B cell (primary cell): ENCODE measurements at regions of chr4 and their contacts with region 1.

Region 1: GRCh38 chr4:184851200-184851541 is 25.4 kb upstream of the ACSL1 start:
- DNase-seq: peak; percentile 73
- ATAC-seq: peak; percentile 84
- H3K4me3 ChIP-seq: peak overlapping the region in 1 of 5 experiments; percentile 1
- H3K4me3 Mint-ChIP-seq: no peak overlapping the region
- H3K27ac ChIP-seq: peak overlapping the region in 1 of 2 donors; percentile 25
- H3K27ac Mint-ChIP-seq: no peak overlapping the region
- H3K4me1 ChIP-seq: peaks cover 32 to 52% of the 10 kb centered on the region in 2 donors
- H3K4me1 Mint-ChIP-seq: peaks cover 35% of the 10 kb centered on the region
- H3K27me3 ChIP-seq: no peaks in the 10 kb centered on the region
- H3K27me3 Mint-ChIP-seq: no peaks in the 10 kb centered on the region
- CTCF ChIP-seq: no peak

Region 2: GRCh38 chr4:184815046-184815877 is 35.9 kb before region 1 on chr4:
- CTCF ChIA-PET with region 1: no interaction called
- POLR2A ChIA-PET with region 1: interaction called, 3 read pairs
- intact Hi-C with region 1: loop called (anchors 5 kb)
- DNase-seq: peak; percentile 45
- ATAC-seq: peak; percentile 65
- H3K4me3 ChIP-seq: peak overlapping the region in 2 of 5 experiments; percentile 6 to 9
- H3K4me3 Mint-ChIP-seq: peak overlapping the region; percentile 78
- H3K27ac ChIP-seq: peak overlapping the region; percentile 45 to 47
- H3K27ac Mint-ChIP-seq: peak overlapping the region; percentile 80
- H3K4me1 ChIP-seq: peaks cover 40 to 51% of the 10 kb centered on the region in 2 donors
- H3K4me1 Mint-ChIP-seq: peaks cover 74% of the 10 kb centered on the region
- H3K27me3 ChIP-seq: no peaks in the 10 kb centered on the region
- H3K27me3 Mint-ChIP-seq: no peaks in the 10 kb centered on the region
- CTCF ChIP-seq: no peak

Region 3: GRCh38 chr4:184899261-184900134 is 48.3 kb after region 1 on chr4:
- CTCF ChIA-PET with region 1: no interaction called
- POLR2A ChIA-PET with region 1: no interaction called
- intact Hi-C with region 1: loop called (anchors 10 kb)
- DNase-seq: no peak
- ATAC-seq: no peak
- H3K4me3 ChIP-seq: no peak overlapping the region
- H3K4me3 Mint-ChIP-seq: no peak overlapping the region
- H3K27ac ChIP-seq: no peak overlapping the region
- H3K27ac Mint-ChIP-seq: no peak overlapping the region
- H3K4me1 ChIP-seq: peaks cover 4 to 6% of the 10 kb centered on the region in 2 donors
- H3K4me1 Mint-ChIP-seq: peaks cover 14% of the 10 kb centered on the region
- H3K27me3 ChIP-seq: peaks cover 0 to 10% (median 1%) of the 10 kb centered on the region in 4 experiments
- H3K27me3 Mint-ChIP-seq: peaks cover 16% of the 10 kb centered on the region
- CTCF ChIP-seq: no peak